ENCODE measurements at regions of chr12 and their contacts with region 1.

Region 1: GRCh38 chr12:57782608-57783465 is at the start of gene TSFM:
- DNase-seq: peak; percentile 99
- ATAC-seq: peak; percentile 93
- H3K4me3 Mint-ChIP-seq: peak within 1 kb of the TSS; percentile 98
- H3K27ac Mint-ChIP-seq: peak within 1 kb of the TSS; percentile 98
- H3K4me1 Mint-ChIP-seq: peaks cover 35% of the 10 kb centered on the region
- H3K27me3 Mint-ChIP-seq: no peaks in the 10 kb centered on the region
- total RNA-seq, gene TSFM: 30.7 to 56.9 TPM

Region 2: GRCh38 chr12:57771708-57772428 is 11.0 kb before region 1 on chr12 and contains the start of gene METTL1:
- CTCF ChIA-PET with region 1: interaction called, 9 read pairs
- POLR2A ChIA-PET with region 1: interaction called, 5 read pairs
- intact Hi-C with region 1: loop called (anchors 1 kb)
- DNase-seq: peak; percentile 97
- ATAC-seq: peak; percentile 89
- H3K4me3 Mint-ChIP-seq: peak within 1 kb of the TSS; percentile 94
- H3K27ac Mint-ChIP-seq: peak within 1 kb of the TSS; percentile 98
- H3K4me1 Mint-ChIP-seq: peaks cover 24% of the 10 kb centered on the region
- H3K27me3 Mint-ChIP-seq: no peaks in the 10 kb centered on the region
- total RNA-seq, gene METTL1: 31.9 to 33.5 TPM

Region 3: DNA sequence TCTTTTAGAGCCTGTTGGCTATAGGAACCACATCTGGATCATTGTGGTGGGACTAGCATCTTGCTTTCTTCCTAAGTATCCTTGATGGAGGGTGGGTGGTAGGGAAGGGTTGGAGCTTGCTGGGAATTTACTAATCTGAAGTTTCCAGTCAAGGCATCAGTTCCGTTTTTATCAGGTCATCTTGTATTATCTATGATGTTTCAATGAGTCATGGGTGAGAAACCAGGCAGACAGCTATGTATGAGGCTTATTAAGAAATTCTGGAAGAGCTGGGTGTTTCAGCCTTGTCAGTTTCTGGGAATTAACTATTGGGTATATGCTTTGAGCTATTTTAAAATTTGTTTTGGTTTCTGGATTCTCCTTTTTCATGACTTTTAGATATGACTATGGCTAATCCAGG is 11.1 kb after region 1 on chr12:
- CTCF ChIA-PET with region 1: interaction called, 17 read pairs
- POLR2A ChIA-PET with region 1: interaction called, 3 read pairs
- intact Hi-C with region 1: no loop called
- DNase-seq: no peak
- ATAC-seq: peak; percentile 33
- H3K4me3 Mint-ChIP-seq: no peak overlapping the region
- H3K27ac Mint-ChIP-seq: peak overlapping the region; percentile 69
- H3K4me1 Mint-ChIP-seq: peaks cover 13% of the 10 kb centered on the region
- H3K27me3 Mint-ChIP-seq: no peaks in the 10 kb centered on the region

Region 4: DNA sequence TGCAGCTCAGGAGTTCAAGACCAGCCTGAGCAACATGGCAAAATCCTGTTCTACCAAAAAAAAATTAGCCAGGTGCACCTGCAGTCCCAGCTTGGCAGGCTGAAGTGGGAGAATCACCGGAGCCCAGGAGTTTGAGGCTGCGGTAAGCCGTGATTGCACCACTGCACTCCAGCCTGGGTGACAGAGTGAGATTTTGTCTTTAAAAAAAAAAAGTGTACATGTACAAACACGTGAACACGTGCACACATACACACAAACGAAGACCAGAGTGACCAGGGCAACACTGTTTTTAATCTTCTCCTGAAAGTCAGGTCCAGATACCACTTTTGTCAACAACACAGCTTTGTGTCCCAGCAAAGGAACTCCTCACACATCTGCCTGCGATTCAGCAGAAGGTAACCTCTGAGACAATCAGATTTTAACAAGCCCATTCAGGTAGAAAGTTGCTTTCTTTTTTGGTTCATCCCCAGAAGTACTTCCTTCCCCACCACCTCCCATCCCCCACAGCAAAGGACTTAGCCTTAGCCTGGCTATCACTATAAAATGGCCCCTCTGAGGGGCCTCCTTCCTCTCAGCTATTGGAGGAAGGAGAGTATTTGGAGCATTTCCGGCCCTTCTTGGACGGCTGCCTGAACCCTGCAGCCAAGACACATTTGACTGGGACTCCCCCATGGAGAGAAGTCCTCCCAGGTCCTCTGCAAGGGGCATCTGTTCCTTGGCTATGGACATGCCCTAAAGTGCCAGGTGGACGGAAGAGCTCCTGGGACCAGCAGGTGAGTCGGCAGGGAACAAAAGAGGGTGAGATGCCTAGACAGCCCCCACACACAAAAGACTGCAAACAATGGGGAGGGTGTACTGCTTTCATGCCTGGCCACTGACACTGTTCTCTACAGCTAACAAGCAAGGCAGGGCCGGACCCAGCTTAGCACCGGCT is 53.9 kb after region 1 on chr12:
- CTCF ChIA-PET with region 1: interaction called, 12 read pairs
- POLR2A ChIA-PET with region 1: no interaction called
- intact Hi-C with region 1: no loop called
- DNase-seq: peak; percentile 68
- ATAC-seq: peak; percentile 51
- H3K4me3 Mint-ChIP-seq: peak overlapping the region; percentile 49
- H3K27ac Mint-ChIP-seq: peak overlapping the region; percentile 85
- H3K4me1 Mint-ChIP-seq: peaks cover 94% of the 10 kb centered on the region
- H3K27me3 Mint-ChIP-seq: no peaks in the 10 kb centered on the region

Region 5: DNA sequence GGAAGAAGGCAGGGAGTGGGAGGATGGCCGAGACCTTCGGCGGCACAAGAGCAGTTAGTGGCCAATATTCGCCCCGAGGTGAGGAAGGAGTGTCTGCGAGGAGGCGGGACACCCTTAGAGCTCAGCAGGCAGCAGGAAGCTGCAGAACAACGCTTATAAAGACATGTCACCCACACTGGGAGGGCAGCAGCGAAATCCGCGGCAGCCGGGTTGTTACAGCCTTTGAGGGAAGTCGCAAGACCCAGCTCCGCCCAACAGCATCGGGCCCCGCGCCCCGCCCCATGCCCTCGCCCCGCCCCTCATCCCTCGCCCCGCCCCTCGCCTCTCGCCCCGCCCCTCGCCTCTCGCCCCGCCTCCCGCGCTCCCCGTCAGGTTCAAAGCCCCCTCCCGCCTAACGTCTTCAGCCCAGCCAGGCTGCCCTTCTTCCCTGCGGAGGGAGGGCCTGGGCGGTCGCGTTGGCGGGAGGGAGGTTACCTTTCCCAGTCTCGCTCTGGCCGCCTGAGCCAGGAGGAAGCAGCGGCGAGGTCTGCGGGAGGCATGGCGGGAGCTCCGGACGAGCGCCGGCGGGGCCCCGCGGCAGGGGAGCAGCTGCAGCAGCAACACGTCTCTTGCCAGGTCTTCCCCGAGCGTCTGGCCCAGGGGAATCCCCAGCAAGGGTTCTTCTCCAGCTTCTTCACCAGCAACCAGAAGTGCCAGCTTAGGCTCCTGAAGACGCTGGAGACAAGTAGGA is 158.5 kb after region 1 on chr12 and contains the start of gene ATP23:
- CTCF ChIA-PET with region 1: interaction called, 4 read pairs
- POLR2A ChIA-PET with region 1: interaction called, 3 read pairs
- intact Hi-C with region 1: loop called in 1 of 2 experiments (anchors 2 kb)
- DNase-seq: peak; percentile 94
- ATAC-seq: peak; percentile 90
- H3K4me3 Mint-ChIP-seq: peak within 1 kb of the TSS; percentile 77
- H3K27ac Mint-ChIP-seq: peak within 1 kb of the TSS; percentile 90
- H3K4me1 Mint-ChIP-seq: peaks cover 43% of the 10 kb centered on the region
- H3K27me3 Mint-ChIP-seq: no peaks in the 10 kb centered on the region
- total RNA-seq, gene ATP23: 17.8 to 17.9 TPM